ENCODE measurements at regions of chr12 and their contacts with region 1.

Region 1: GRCh38 chr12:121571920-121572319 is 8.9 kb downstream of the KDM2B start:
- DNase-seq: no peak

Region 2: GRCh38 chr12:121209624-121210572 is 362.0 kb before region 1 on chr12 and contains the start of gene P2RX4:
- intact Hi-C with region 1: no loop called
- DNase-seq: peak; percentile 71 to 98 (median 84)

Region 3: DNA sequence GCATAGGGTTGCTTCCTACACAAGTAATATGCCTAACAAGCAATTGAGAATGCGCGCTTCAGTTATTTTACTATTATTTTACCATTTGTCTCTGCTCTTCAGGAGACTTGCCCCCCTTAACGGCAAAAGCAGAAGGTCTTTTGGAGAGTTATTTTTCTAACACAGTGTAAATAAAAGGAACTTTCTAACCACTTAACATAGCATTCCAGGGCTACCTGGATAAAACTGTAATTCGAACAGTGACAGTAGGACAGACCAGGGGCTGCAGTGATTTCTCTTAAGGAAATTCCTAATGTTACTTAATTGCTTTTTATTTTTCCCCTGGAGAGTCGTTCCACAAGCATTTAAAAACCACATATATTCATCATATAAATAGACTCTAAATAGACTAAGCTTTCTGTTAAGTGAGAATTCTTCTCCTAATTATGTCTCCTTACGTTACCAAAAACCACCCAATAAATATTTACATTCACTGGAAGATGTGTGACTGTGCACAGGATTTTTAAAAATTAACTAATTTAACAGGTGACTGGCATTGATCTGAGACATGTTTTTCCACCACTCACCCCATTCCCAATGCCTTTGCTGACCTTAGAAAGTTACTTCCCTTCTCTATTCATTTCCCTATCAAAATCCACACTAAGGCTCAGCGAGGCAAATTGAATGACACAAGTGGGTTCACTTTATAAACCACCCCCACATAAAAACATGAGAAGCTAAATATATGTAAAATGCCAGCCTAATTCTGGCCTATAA is 99.6 kb before region 1 on chr12:
- intact Hi-C with region 1: no loop called
- DNase-seq: no peak

Region 4: DNA sequence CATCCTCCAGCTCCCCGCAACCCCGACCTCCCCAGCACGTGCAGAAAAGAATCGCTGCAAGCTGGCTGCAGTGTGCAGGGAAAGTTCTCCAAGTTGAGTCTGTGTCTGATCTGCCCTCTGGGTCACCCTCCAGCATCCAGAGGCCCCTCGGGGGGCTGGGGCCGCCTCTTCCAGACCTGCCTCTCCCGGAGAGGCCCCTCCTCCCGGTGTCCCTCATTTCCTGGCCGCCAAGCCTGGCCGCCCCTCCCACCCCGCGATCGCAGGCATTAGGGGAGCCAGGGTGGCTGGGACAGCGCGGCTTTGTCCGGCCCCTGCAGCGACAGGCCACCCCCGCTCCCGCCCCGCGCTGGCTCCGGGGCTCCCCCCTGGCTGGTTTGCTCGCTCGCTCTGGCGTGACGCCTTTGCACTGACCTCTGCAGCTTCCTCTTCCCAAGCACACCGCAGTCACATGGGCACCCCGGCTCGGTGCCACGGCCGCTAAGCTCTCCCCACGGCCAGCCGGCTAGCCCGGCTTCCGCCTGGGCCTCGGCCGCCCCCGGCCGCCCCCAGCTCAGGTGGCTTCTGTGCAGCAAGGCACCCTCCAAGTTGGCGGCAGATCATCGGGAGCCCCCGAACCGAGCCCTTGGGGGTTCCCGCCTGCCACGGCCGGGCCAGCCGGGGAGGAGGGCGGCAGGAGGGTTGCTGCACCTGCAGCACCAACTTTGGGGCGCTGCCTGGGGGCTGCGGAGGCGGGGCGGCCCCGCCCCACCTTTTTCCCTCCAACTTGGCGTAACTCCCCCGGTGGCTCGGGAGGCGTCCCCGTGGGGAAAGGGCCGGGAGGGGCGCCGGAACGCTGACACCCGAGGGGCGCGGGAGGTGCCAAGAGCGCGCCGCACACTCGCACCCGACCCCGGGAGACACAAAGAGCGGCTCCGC is 34.8 kb before region 1 on chr12:
- intact Hi-C with region 1: no loop called
- DNase-seq: peak; percentile 67 to 96 (median 80)

Region 5: GRCh38 chr12:121560392-121561008 is 11.4 kb before region 1 on chr12:
- intact Hi-C with region 1: loop called (anchors 2 kb)
- DNase-seq: peak in 1 of 10 donors; percentile 58

Measured in posterior cingulate gyrus (tissue), 11 donors.